ENCODE measurements at regions of chr3 and their contacts with region 1.

Region 1: DNA sequence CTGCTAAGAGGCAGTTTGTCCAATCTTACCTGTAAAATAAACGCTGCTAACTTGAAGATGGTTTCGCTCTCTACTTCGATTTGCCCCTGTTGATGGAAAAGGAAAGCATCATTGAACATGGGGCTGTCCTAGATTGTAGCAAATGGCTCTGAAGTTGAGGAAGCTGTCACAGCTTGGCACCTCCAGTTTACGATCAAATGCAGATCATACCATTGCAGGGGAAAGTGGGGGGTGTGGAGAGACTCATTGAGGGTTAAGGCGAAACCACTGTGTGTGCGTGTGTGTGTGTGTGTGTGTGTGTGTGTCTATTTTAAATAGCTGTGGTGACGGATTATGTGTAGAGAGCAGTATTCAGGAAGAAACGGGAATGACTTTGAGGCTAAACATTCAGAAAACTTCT is 127.6 kb upstream of the LMOD3 start:
- DNase-seq: peak; percentile 58
- H3K4me3 Mint-ChIP-seq: peak overlapping the region; percentile 71
- H3K27ac Mint-ChIP-seq: peak overlapping the region; percentile 86
- H3K4me1 Mint-ChIP-seq: peaks cover 28% of the 10 kb centered on the region
- H3K27me3 Mint-ChIP-seq: peaks cover 3% of the 10 kb centered on the region

Region 2: DNA sequence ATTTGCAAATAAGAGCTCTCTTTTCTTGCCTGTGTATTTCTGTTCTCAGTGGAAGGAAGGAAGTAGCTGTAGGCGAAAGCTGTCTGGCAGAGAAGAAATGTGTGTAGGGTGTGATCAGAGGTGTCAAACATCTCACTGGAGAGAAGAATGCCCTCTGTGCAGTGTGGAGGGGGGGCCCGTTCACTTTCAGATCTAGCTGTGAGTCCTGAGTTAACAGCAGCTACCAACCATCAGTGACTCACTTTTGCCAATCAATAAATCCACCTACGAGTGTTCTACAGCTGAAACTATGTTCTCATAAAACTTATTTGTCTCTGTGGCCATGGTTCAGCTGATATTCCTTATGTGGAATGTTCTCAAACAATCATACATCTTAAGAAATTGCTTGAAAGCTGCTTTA is 32.2 kb after region 1 on chr3:
- intact Hi-C with region 1: loop called (anchors 1 kb)
- DNase-seq: peak; percentile 12
- H3K4me3 Mint-ChIP-seq: peak overlapping the region; percentile 19
- H3K27ac Mint-ChIP-seq: peak overlapping the region; percentile 84
- H3K4me1 Mint-ChIP-seq: peaks cover 45% of the 10 kb centered on the region
- H3K27me3 Mint-ChIP-seq: no peaks in the 10 kb centered on the region

Measured in activated T-helper 1 cell treated with anti-CD3 and anti-CD28 coated beads, Interleukin-12 subunit alpha, Interleukin-12 subunit beta, Interleukin-2, Interleukin-4 antibody, amounts not matched to agents 30 ng/mL and 10 ng/mL and 1 ng/mL, durations not matched to agents 14 hours and 24 hours and 36 hours (primary cell).